CD8-positive, alpha-beta memory T cell (primary cell): ENCODE measurements at regions of chr10 and their contacts with region 1.

Region 1: GRCh38 chr10:3961082-3961481 is 176.1 kb upstream of the KLF6 start:
- DNase-seq: peak; percentile 49 to 81 (median 64)
- H3K4me3 ChIP-seq: no peak overlapping the region
- H3K4me3 Mint-ChIP-seq: peak overlapping the region; percentile 18 to 80 (median 76)
- H3K27ac ChIP-seq: no peak overlapping the region
- H3K27ac Mint-ChIP-seq: peak overlapping the region; percentile 64 to 91 (median 84)
- H3K4me1 ChIP-seq: peaks cover 26% of the 10 kb centered on the region
- H3K4me1 Mint-ChIP-seq: peaks cover 38 to 63% (median 45%) of the 10 kb centered on the region in 3 donors
- H3K27me3 ChIP-seq: no peaks in the 10 kb centered on the region
- H3K27me3 Mint-ChIP-seq: no peaks in the 10 kb centered on the region

Region 2: GRCh38 chr10:3948843-3949242 is 12.2 kb before region 1 on chr10:
- CTCF ChIA-PET with region 1: interaction called, 7 read pairs
- POLR2A ChIA-PET with region 1: interaction called, 19 read pairs
- DNase-seq: peak; percentile 57 to 94 (median 69)
- H3K4me3 ChIP-seq: no peak overlapping the region
- H3K4me3 Mint-ChIP-seq: peak overlapping the region; percentile 59 to 89 (median 72)
- H3K27ac ChIP-seq: peak overlapping the region; percentile 36
- H3K27ac Mint-ChIP-seq: peak overlapping the region; percentile 90 to 98 (median 97)
- H3K4me1 ChIP-seq: peaks cover 56% of the 10 kb centered on the region
- H3K4me1 Mint-ChIP-seq: peaks cover 67 to 90% (median 85%) of the 10 kb centered on the region in 3 donors
- H3K27me3 ChIP-seq: no peaks in the 10 kb centered on the region
- H3K27me3 Mint-ChIP-seq: no peaks in the 10 kb centered on the region

Region 3: GRCh38 chr10:3972460-3973301 is 11.6 kb after region 1 on chr10:
- CTCF ChIA-PET with region 1: interaction called, 11 read pairs
- POLR2A ChIA-PET with region 1: interaction called, 15 read pairs
- DNase-seq: peak in 4 of 5 donors; percentile 11 to 55 (median 15)
- H3K4me3 ChIP-seq: peak overlapping the region; percentile 24
- H3K4me3 Mint-ChIP-seq: peak overlapping the region; percentile 24 to 91 (median 81)
- H3K27ac ChIP-seq: peak overlapping the region; percentile 34
- H3K27ac Mint-ChIP-seq: peak overlapping the region; percentile 82 to 99 (median 96)
- H3K4me1 ChIP-seq: peaks cover 74% of the 10 kb centered on the region
- H3K4me1 Mint-ChIP-seq: peaks cover 54 to 64% (median 63%) of the 10 kb centered on the region in 3 donors
- H3K27me3 ChIP-seq: no peaks in the 10 kb centered on the region
- H3K27me3 Mint-ChIP-seq: no peaks in the 10 kb centered on the region

Region 4: DNA sequence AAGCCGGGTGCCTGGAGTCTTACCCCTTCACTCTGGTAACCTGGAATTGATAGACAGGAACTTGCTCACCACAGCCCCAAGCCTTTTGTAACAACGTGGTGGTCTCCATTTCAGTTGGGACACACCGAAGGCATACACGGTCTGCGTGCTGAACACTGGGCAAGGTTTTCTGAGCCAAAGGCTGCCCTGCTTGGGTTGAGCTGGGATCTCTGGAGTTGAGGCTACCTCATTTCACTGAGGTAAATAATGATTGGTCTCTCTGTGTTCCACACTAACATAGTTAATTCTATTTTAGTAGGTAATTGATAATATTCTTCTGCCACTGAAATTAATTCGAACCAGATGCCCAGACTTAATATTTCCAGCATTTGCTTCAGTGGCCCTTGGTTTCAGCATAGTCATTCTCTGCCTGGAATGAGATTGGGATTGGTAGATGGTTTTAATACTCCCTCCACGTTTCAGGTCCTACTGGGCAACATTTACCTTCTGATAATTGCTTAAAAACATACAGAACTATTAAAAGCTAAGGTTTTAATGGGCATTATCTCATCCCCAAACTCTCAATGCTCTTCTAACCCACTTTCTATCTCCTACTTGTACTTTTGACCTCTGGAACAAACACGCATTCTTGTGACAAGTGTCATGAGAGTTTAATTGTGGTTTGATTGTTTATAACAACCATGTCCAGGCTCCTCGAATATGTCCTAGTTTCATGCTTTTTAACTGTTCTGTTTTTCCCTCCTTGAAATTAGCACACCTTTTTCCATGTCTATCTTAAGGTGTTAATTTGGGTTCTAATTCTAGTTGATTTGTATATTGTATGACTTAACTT is 26.3 kb after region 1 on chr10:
- CTCF ChIA-PET with region 1: no interaction called
- POLR2A ChIA-PET with region 1: no interaction called
- DNase-seq: no peak
- H3K4me3 ChIP-seq: no peak overlapping the region
- H3K4me3 Mint-ChIP-seq: peak overlapping the region in 1 of 7 donors; percentile 13
- H3K27ac ChIP-seq: no peak overlapping the region
- H3K27ac Mint-ChIP-seq: no peak overlapping the region
- H3K4me1 ChIP-seq: no peaks in the 10 kb centered on the region
- H3K4me1 Mint-ChIP-seq: peaks cover 10 to 21% (median 12%) of the 10 kb centered on the region in 3 donors
- H3K27me3 ChIP-seq: no peaks in the 10 kb centered on the region
- H3K27me3 Mint-ChIP-seq: no peaks in the 10 kb centered on the region

Region 5: DNA sequence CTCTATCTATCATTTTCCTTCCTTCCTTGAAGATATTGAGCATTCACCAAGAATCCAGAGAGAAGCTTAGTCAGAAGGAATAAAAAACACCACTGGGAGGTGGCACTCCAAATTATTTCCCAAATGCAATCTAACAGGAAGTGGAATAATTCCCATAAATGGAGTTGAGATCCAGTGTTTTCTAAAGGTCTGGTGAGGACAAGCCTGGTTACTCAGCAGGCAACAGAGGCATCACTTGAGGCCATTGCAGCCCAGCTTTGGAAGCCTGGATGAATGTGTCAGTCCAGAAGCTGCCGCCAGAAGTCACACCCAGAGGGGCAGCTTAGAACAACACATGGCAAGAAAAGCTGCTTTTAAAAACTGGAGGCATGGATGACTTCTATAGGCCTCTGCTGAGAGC is 112.8 kb after region 1 on chr10:
- CTCF ChIA-PET with region 1: no interaction called
- POLR2A ChIA-PET with region 1: no interaction called
- DNase-seq: no peak
- H3K4me3 ChIP-seq: no peak overlapping the region
- H3K4me3 Mint-ChIP-seq: peak overlapping the region in 1 of 7 donors; percentile 88
- H3K27ac ChIP-seq: no peak overlapping the region
- H3K27ac Mint-ChIP-seq: peak overlapping the region; percentile 18 to 98 (median 79)
- H3K4me1 ChIP-seq: peaks cover 28% of the 10 kb centered on the region
- H3K4me1 Mint-ChIP-seq: peaks cover 31 to 58% (median 54%) of the 10 kb centered on the region in 3 donors
- H3K27me3 ChIP-seq: no peaks in the 10 kb centered on the region
- H3K27me3 Mint-ChIP-seq: peaks cover 0 to 1% of the 10 kb centered on the region in 2 donors

Region 6: GRCh38 chr10:4260483-4261124 is 299.5 kb after region 1 on chr10:
- CTCF ChIA-PET with region 1: no interaction called
- POLR2A ChIA-PET with region 1: no interaction called
- DNase-seq: no peak
- H3K4me3 ChIP-seq: no peak overlapping the region
- H3K4me3 Mint-ChIP-seq: no peak overlapping the region
- H3K27ac ChIP-seq: no peak overlapping the region
- H3K27ac Mint-ChIP-seq: no peak overlapping the region
- H3K4me1 ChIP-seq: no peaks in the 10 kb centered on the region
- H3K4me1 Mint-ChIP-seq: peaks cover 0 to under 1% (median 0%) of the 10 kb centered on the region in 3 donors
- H3K27me3 ChIP-seq: no peaks in the 10 kb centered on the region
- H3K27me3 Mint-ChIP-seq: peaks cover 0 to 2% of the 10 kb centered on the region in 2 donors